IMR-90 (cell line): ENCODE measurements at regions of chr9 and their contacts with region 1.

Region 1: DNA sequence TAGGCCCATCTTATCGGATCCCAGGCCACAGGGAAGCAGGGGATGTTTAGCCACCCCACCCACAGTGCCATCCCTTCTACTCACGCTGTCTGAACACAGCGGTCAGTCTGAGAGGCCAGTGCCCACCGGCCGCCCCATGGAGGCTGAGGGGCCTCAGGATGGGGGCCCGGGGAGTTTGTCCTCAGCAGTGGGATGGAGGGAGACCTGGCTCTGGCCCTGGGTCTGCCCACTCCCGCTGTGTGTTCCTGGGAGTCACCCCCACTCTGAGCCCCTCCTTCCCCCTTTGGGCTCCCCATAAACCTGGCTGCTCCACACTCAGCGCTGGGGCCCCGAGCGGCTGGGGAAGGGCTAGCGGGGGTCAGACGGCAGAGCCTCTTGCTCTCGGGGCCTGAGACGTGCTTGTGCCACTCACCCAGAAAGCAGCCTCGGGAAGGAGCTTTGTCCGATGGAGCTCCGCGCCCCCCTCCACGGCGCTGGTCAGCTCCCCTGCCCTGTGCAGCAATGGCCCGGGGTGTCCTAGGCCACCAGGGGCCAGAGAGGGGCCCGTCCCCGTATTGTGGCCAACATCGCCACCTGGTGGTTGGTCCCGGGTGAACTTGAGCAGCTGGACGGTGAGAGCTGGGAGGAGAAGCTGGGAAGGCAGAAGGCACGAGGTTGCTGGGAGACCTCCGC is 10.9 kb upstream of the LAMC3 start:
- DNase-seq: peak; percentile 54
- ATAC-seq: peak; percentile 90
- H3K4me3 ChIP-seq: no peak overlapping the region
- H3K27ac ChIP-seq: no peak overlapping the region
- H3K4me1 ChIP-seq: peaks cover 10% of the 10 kb centered on the region; the same call in 1 of the 2 replicates
- H3K27me3 ChIP-seq: peaks cover 25% of the 10 kb centered on the region
- CTCF ChIP-seq: peak; percentile 82
- POLR2A ChIP-seq: no peak
- RAD21 ChIP-seq: peak; percentile 87

Region 2: DNA sequence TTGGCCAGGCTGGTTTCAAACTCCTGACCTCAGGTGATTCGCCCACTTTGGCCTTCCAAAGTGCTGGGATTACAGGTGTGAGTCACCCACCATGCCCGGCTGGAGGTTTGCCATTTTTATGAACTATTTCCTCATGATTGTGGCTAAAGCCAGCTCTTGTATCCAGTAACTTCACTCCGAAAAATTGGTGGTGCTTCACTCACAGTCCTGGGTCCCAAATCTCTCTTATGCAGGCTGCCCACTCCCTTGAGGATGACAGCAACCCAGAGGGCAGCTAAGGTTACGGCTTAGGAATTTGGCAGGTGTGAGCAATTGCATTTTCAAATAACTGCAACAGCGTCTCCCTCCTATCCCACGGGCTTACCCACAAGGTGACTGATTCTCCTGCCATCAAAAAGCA is 442.1 kb before region 1 on chr9:
- CTCF ChIA-PET with region 1: no interaction called
- POLR2A ChIA-PET with region 1: no interaction called
- dilution Hi-C with region 1: no loop called
- in situ Hi-C with region 1: no loop called
- intact Hi-C with region 1: no loop called
- DNase-seq: no peak
- ATAC-seq: no peak
- H3K4me3 ChIP-seq: no peak overlapping the region
- H3K27ac ChIP-seq: no peak overlapping the region
- H3K4me1 ChIP-seq: no peaks in the 10 kb centered on the region
- H3K27me3 ChIP-seq: peaks cover 52% of the 10 kb centered on the region
- CTCF ChIP-seq: no peak
- POLR2A ChIP-seq: no peak
- RAD21 ChIP-seq: no peak

Region 3: GRCh38 chr9:130707225-130707976 is 290.7 kb before region 1 on chr9:
- CTCF ChIA-PET with region 1: interaction called, 3 read pairs
- POLR2A ChIA-PET with region 1: no interaction called
- dilution Hi-C with region 1: no loop called
- in situ Hi-C with region 1: loop called (anchors 5 kb)
- intact Hi-C with region 1: loop called (anchors 2 kb)
- DNase-seq: peak; percentile 68
- ATAC-seq: peak; percentile 64
- H3K4me3 ChIP-seq: no peak overlapping the region
- H3K27ac ChIP-seq: no peak overlapping the region
- H3K4me1 ChIP-seq: peaks cover 4% of the 10 kb centered on the region; the same call in 1 of the 2 replicates
- H3K27me3 ChIP-seq: no peaks in the 10 kb centered on the region
- CTCF ChIP-seq: peak; percentile 84
- POLR2A ChIP-seq: peak; percentile 36; the same call in 1 of the 2 replicates
- RAD21 ChIP-seq: peak; percentile 81

Region 4: DNA sequence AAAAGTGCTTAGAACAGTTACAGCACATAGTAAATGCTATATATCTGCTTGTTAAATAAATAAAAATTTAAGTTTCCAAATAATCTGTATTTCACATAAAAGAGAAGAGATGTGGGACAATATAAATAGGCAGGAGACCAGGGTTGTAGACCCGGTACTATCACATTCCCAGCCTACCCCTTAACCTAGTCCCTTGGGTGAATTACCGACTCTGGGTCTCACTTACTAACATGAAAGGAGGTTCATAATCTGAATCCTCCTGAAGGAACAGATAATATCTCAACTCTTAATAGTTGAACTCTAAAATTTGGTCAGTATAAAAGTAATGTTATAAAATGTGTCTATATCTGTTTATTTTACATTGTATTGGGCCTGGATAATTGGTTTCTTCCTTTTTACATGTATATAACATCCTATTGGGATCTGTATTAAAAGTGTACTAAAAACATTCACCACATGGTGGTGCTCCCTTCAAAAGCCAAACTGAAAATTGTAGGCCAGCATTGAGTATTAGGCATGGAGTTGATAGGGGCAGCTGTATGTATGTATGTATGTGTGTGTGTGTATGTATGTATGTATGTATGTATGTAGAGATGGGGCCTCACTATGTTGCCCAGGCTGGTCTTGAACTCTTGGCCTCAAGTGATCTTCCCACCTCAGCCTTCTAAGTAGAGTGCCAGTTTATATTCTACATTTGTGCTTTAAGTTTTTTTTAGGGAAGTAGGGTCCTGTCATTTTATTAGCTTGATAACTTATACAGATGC is 227.2 kb before region 1 on chr9:
- CTCF ChIA-PET with region 1: no interaction called
- POLR2A ChIA-PET with region 1: no interaction called
- dilution Hi-C with region 1: no loop called
- in situ Hi-C with region 1: no loop called
- intact Hi-C with region 1: loop called (anchors 5 kb)
- DNase-seq: peak; percentile 82
- ATAC-seq: peak; percentile 91
- H3K4me3 ChIP-seq: no peak overlapping the region
- H3K27ac ChIP-seq: no peak overlapping the region
- H3K4me1 ChIP-seq: peaks cover 20% of the 10 kb centered on the region
- H3K27me3 ChIP-seq: no peaks in the 10 kb centered on the region
- CTCF ChIP-seq: peak; percentile 74
- POLR2A ChIP-seq: no peak
- RAD21 ChIP-seq: peak; percentile 85

Region 5: GRCh38 chr9:130893341-130894101 is 104.5 kb before region 1 on chr9:
- CTCF ChIA-PET with region 1: interaction called, 3 read pairs
- POLR2A ChIA-PET with region 1: no interaction called
- dilution Hi-C with region 1: no loop called
- in situ Hi-C with region 1: no loop called
- intact Hi-C with region 1: loop called (anchors 5 kb)
- DNase-seq: no peak
- ATAC-seq: peak; percentile 22; the same call in 1 of the 2 replicates
- H3K4me3 ChIP-seq: no peak overlapping the region
- H3K27ac ChIP-seq: no peak overlapping the region
- H3K4me1 ChIP-seq: no peaks in the 10 kb centered on the region
- H3K27me3 ChIP-seq: no peaks in the 10 kb centered on the region
- CTCF ChIP-seq: 0 out of 2 replicates have a peak, but pooled peaks have one; percentile 16
- POLR2A ChIP-seq: no peak
- RAD21 ChIP-seq: peak; percentile 30; the same call in 1 of the 2 replicates

Region 6: DNA sequence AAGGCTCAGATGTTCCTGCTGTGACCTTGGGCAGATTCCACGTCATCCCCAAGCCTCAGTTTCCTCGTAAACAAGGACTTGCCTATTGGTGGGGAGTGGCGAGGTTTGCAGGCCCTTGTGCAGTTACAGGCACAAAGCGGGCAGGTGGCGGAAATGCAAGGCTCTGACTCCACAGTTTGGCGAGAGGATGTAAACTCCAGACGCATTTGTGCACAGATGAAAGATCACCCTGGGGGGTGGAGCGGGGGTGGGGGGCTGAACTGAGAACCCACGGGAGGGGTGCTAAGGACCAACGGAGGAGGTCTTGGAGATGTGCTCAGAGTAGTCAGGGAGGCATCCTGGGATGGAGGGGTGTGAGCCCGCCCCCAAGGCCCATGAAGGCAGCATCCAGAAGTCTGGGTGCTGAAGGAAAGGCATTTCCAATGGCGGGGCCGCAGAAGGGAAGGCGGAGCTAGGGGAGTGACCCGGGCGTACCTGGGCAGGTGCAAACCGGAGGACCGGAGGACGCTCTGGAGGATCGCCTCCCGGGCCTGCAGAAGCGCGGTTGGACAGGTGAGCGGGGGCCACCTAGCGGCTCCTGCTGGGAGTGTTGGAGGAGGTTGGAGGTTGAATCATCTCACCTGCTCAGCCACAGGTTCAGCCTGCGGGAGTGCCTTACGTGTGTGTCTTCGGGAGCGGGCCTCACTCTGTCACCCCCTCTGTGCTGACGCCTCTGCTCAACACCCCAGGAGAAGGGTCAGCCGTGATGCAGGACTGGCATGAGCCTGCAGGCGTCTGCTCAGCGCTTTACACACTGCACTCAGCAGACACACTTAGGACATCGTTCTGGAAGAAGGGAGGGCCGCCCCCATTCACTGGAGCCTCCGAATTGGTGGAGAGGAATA is 57.1 kb before region 1 on chr9:
- CTCF ChIA-PET with region 1: no interaction called
- POLR2A ChIA-PET with region 1: no interaction called
- dilution Hi-C with region 1: no loop called
- in situ Hi-C with region 1: no loop called
- intact Hi-C with region 1: loop called (anchors 5 kb)
- DNase-seq: peak; percentile 15
- ATAC-seq: no peak
- H3K4me3 ChIP-seq: no peak overlapping the region
- H3K27ac ChIP-seq: no peak overlapping the region
- H3K4me1 ChIP-seq: peaks cover 15% of the 10 kb centered on the region
- H3K27me3 ChIP-seq: peaks cover 45% of the 10 kb centered on the region
- CTCF ChIP-seq: peak; percentile 72
- POLR2A ChIP-seq: no peak
- RAD21 ChIP-seq: peak; percentile 74

Region 7: GRCh38 chr9:130956636-130957450 is 41.2 kb before region 1 on chr9:
- CTCF ChIA-PET with region 1: no interaction called
- POLR2A ChIA-PET with region 1: no interaction called
- dilution Hi-C with region 1: no loop called
- in situ Hi-C with region 1: no loop called
- intact Hi-C with region 1: no loop called
- DNase-seq: no peak
- ATAC-seq: no peak
- H3K4me3 ChIP-seq: no peak overlapping the region
- H3K27ac ChIP-seq: no peak overlapping the region
- H3K4me1 ChIP-seq: peaks cover under 1% of the 10 kb centered on the region
- H3K27me3 ChIP-seq: peaks cover 27% of the 10 kb centered on the region
- CTCF ChIP-seq: no peak
- POLR2A ChIP-seq: no peak
- RAD21 ChIP-seq: no peak